Right lobe of liver (tissue), 6 donors: ENCODE measurements at regions of chr4 and their contacts with region 1.

Region 1: GRCh38 chr4:121726642-121727268 is 30.0 kb upstream of the ANXA5 start:
- DNase-seq: no peak
- ATAC-seq: peak; percentile 91 to 98 (median 95)
- H3K4me3 ChIP-seq: no peak overlapping the region
- H3K27ac ChIP-seq: no peak overlapping the region
- H3K4me1 ChIP-seq: no peaks in the 10 kb centered on the region
- H3K27me3 ChIP-seq: no peaks in the 10 kb centered on the region
- CTCF ChIP-seq: peak; percentile 66 to 86 (median 74)
- POLR2A ChIP-seq: no peak

Region 2: DNA sequence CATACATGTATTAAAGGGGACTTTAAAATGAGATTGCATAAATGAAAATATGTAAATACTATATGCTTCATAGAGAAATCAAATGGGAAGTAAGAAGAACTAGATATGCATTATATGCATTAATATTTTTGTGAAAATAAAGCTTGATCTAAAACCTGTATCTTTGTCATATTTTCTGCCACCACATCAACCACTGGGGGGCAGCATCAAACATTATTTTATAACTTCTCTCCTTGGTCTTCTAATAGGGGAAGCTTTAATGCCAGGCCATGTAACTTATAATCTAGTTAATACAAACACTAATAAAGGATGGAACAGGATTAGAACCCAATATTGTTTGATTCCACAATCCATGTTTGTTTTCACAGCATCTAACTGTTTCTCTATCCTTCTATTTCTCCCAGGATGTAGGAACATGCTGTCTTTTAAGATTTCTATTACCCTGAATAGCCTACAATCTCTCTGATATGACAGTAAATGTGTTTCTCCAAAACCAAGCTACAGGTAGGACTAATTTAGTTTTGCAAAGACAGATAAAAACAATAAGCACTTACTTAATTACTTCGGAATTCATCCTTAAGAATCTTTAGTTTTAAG is 355.9 kb before region 1 on chr4:
- intact Hi-C with region 1: loop called in 1 of 2 experiments (anchors 10 kb)
- DNase-seq: no peak
- ATAC-seq: peak; percentile 48 to 59 (median 50)
- H3K4me3 ChIP-seq: no peak overlapping the region
- H3K27ac ChIP-seq: no peak overlapping the region
- H3K4me1 ChIP-seq: no peaks in the 10 kb centered on the region
- H3K27me3 ChIP-seq: no peaks in the 10 kb centered on the region
- CTCF ChIP-seq: peak; percentile 33 to 61 (median 60)
- POLR2A ChIP-seq: no peak

Region 3: DNA sequence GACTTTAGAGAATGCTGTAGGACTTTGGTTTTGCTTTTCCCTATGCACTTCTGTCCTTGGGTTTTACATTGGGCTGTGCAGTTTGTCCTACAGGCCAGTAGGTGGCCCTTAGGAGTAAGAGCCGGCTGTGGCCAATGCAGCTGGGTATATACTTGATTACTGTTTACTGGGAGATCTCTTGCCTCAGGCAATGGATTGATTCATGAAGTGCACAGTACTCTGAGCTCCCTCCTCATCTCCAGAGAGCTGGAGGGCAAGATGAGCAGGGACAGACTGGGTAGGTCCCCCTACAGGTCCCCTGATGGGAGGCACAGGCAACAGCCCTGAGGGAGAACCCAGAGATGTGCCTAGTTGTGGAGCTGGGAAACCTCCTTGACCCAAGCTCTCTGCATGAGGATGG is 242.1 kb before region 1 on chr4:
- intact Hi-C with region 1: loop called in 1 of 2 experiments (anchors 10 kb)
- DNase-seq: peak in 1 of 3 donors; percentile 46
- ATAC-seq: peak; percentile 87 to 95 (median 91)
- H3K4me3 ChIP-seq: no peak overlapping the region
- H3K27ac ChIP-seq: no peak overlapping the region
- H3K4me1 ChIP-seq: no peaks in the 10 kb centered on the region
- H3K27me3 ChIP-seq: no peaks in the 10 kb centered on the region
- CTCF ChIP-seq: peak; percentile 54 to 73 (median 66)
- POLR2A ChIP-seq: no peak